Psoas muscle (tissue), 8 donors: ENCODE measurements at regions of chrX and their contacts with region 1.

Region 1: GRCh38 chrX:1591102-1591900 is at the start of gene AKAP17A:
- DNase-seq: peak; percentile 96 to 98
- ATAC-seq: peak; percentile 97 to 99 (median 98)
- H3K4me3 ChIP-seq: peak within 1 kb of the TSS; percentile 77
- H3K27ac ChIP-seq: peak within 1 kb of the TSS; percentile 88
- H3K4me1 ChIP-seq: peaks cover 12% of the 10 kb centered on the region
- H3K27me3 ChIP-seq: no peaks in the 10 kb centered on the region
- CTCF ChIP-seq: no peak
- total RNA-seq, gene AKAP17A: 9.9 to 20.4 (median 13.1) TPM

Region 2: GRCh38 chrX:989959-990510 is 601.3 kb before region 1 on chrX:
- intact Hi-C with region 1: loop called in 1 of 2 experiments (anchors 5 kb)
- DNase-seq: peak; percentile 78 to 91
- ATAC-seq: peak; percentile 98 to 99 (median 99)
- H3K4me3 ChIP-seq: peak overlapping the region; percentile 64
- H3K27ac ChIP-seq: peak overlapping the region; percentile 55
- H3K4me1 ChIP-seq: no peaks in the 10 kb centered on the region
- H3K27me3 ChIP-seq: peaks cover 0 to 2% (median 0%) of the 10 kb centered on the region in 3 donors
- CTCF ChIP-seq: no peak

Region 3: GRCh38 chrX:1165535-1166196 is 425.6 kb before region 1 on chrX:
- intact Hi-C with region 1: no loop called
- DNase-seq: no peak
- ATAC-seq: no peak
- H3K4me3 ChIP-seq: no peak overlapping the region
- H3K27ac ChIP-seq: no peak overlapping the region
- H3K4me1 ChIP-seq: no peaks in the 10 kb centered on the region
- H3K27me3 ChIP-seq: peaks cover 0 to 4% (median 0%) of the 10 kb centered on the region in 3 donors
- CTCF ChIP-seq: no peak